Activated CD4-positive, alpha-beta memory T cell treated with anti-CD3 and anti-CD28 coated beads for 36 hours (primary cell): ENCODE measurements at regions of chr5 and their contacts with region 1.

Region 1: DNA sequence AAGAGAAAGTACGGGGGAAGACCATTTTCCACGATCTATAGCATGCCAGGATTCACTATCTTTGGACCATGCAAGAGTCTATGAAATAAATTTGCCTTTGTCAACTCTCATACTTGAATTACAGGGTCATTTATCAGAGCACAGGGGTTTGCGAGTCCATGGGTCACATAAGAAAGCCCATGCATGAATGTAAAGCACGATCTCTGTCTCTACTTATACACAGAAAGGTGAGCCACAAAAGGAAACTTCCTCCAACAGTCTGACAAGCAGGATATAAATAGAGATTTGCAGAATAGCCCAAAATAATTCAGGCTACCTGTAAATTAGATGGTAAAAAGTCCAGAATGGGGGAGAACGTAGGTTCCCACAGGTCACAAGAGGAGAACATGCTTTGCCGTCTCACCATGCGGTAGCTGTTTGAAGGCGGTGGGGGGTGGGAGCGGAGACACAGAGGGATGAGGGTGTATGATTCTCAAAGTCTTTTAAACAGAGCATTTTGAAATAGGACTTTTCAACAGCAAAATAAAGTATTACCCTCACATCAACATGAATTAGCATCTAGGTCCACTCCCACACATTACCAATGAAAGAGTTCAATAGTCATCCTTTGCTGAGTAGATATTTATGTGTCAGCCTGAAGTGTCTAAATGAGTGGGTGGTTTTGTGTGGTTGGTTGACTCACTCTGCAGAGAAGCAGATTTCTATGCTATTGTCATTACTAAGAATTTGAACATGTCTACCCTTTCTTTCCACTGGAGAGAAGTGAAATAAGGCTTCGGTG is 279.7 kb downstream of the EBF1 start:
- DNase-seq: peak; percentile 27
- H3K4me3 Mint-ChIP-seq: no peak overlapping the region
- H3K27ac Mint-ChIP-seq: no peak overlapping the region
- H3K4me1 Mint-ChIP-seq: peaks cover 38% of the 10 kb centered on the region
- H3K27me3 Mint-ChIP-seq: peaks cover 12% of the 10 kb centered on the region

Region 2: DNA sequence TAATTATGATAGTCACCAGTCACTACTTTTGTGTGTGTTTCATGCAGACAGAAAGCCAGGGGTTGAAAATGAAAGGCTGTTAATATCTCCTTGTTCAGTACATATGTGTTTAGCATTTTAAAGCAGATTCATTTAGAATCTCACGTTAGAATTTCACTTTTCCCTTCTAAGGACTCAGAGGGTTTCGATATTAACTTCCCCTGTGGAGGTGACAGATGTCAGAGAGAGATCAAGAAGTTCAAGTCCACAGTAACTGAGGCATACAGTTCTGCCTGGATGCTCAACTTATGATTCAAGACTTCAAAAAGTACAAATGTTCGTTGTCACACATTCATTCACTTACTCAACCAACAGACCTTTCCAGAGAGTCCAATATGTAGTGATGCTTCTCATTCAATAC is 28.6 kb after region 1 on chr5:
- CTCF ChIA-PET with region 1: no interaction called
- POLR2A ChIA-PET with region 1: no interaction called
- intact Hi-C with region 1: loop called (anchors 2 kb)
- DNase-seq: no peak
- H3K4me3 Mint-ChIP-seq: no peak overlapping the region
- H3K27ac Mint-ChIP-seq: no peak overlapping the region
- H3K4me1 Mint-ChIP-seq: peaks cover 14% of the 10 kb centered on the region
- H3K27me3 Mint-ChIP-seq: peaks cover 4% of the 10 kb centered on the region

Region 3: GRCh38 chr5:159100025-159100781 is 280.2 kb after region 1 on chr5:
- CTCF ChIA-PET with region 1: no interaction called
- POLR2A ChIA-PET with region 1: no interaction called
- intact Hi-C with region 1: loop called (anchors 1 kb)
- DNase-seq: peak; percentile 90
- H3K4me3 Mint-ChIP-seq: peak overlapping the region; percentile 79
- H3K27ac Mint-ChIP-seq: peak overlapping the region; percentile 31
- H3K4me1 Mint-ChIP-seq: peaks cover 35% of the 10 kb centered on the region
- H3K27me3 Mint-ChIP-seq: peaks cover 58% of the 10 kb centered on the region